Uterus (tissue), 4 donors: ENCODE measurements at regions of chr9 and their contacts with region 1.

Region 1: GRCh38 chr9:124771867-124772679 is 962 bp upstream of the NR6A1 start:
- DNase-seq: peak; percentile 63 to 79
- H3K4me3 ChIP-seq: peak overlapping the region; percentile 43 to 85
- H3K27ac ChIP-seq: peak overlapping the region; percentile 61 to 67
- H3K4me1 ChIP-seq: peaks cover 0 to 19% of the 10 kb centered on the region in 2 donors
- H3K27me3 ChIP-seq: peaks cover 0 to 14% of the 10 kb centered on the region in 2 donors
- CTCF ChIP-seq: peak; percentile 95 to 99 (median 97)
- POLR2A ChIP-seq: no peak

Region 2: DNA sequence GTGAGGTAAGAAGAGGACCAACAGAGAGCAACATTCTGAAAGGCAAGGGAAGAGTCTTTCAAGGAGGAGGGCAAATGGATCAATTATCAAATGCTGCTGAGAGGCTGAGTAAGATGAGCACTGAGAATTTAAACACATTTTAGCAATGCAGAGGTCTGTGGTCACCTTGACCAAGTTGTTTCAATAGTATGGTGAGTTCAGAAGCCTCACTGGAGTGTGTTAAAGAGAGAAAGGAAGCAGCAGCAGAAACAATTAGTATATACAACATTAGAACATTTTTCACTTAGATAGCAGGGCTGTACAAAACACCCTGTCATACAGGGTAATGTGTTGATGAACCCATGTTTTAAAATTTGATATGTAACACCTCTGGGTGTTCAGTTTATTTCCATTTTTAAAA is 132.4 kb before region 1 on chr9:
- intact Hi-C with region 1: no loop called
- DNase-seq: no peak
- H3K4me3 ChIP-seq: no peak overlapping the region
- H3K27ac ChIP-seq: no peak overlapping the region
- H3K4me1 ChIP-seq: no peaks in the 10 kb centered on the region
- H3K27me3 ChIP-seq: no peaks in the 10 kb centered on the region
- CTCF ChIP-seq: no peak
- POLR2A ChIP-seq: no peak

Region 3: DNA sequence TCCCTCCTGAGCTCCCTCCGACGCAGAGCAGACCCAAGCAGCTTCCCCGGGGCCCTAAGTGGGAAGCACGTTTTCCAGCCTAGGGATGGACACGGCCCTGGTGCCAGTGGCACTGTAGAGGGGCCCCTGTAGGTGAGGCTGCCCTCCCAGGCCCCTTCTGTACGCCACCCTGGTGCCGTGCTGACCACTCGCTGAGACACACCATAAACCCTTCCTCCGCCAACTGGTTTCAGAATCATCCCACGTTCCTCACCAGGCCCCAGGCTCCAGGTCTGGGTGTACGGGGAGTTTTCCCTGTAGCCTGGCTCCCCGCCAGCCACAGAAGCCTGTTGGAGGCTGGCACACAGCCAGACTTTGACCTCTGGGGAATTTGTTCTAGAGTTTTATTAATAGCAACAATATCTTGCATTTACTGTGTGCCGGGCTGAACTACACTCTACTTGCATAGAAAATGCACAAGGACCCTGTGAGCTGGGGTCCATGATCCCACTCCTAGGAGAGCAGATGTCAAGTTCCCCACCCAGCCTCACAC is 63.0 kb after region 1 on chr9:
- intact Hi-C with region 1: no loop called
- DNase-seq: peak in 1 of 2 donors; percentile 70
- H3K4me3 ChIP-seq: no peak overlapping the region
- H3K27ac ChIP-seq: peak overlapping the region in 1 of 2 donors; percentile 4
- H3K4me1 ChIP-seq: peaks cover 0 to 4% of the 10 kb centered on the region in 2 donors
- H3K27me3 ChIP-seq: no peaks in the 10 kb centered on the region
- CTCF ChIP-seq: no peak
- POLR2A ChIP-seq: no peak

Region 4: DNA sequence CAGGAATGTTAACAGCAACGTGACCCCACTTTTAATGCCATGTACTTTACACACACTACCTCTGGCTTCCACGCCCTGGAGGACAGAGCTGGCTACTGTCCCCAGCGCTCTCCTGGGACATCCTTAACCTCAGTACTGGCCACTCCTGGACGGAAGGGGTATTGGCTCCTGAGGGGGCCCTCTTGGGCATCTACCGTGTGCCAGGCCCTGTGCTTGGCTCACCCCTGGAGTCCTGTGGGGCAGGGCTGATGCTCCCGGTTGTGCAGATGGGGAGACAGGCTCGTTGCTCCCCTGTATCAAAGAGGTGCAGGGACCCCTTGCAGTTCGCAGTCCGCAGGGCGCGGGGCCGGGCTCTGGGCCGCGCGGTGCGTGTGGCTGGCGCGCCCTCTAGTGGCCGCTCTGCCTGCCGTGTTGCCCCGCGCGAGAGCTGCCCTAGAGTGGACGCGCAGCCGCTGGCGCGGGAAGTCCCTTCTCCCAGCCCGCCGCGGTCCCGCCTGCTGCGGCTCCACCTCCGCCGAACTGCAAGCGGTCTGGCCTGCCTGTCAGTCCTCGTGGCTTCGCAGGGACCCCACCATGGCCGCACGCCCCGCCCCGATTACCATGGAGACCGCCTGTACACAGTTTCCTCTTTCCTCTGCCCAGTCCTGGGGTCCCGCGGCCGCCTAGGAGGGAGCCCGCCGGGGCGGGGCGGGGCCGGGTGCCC is 80.9 kb after region 1 on chr9 and contains the start of gene WDR38:
- intact Hi-C with region 1: loop called (anchors 2 kb)
- DNase-seq: peak; percentile 72 to 77
- H3K4me3 ChIP-seq: peak within 1 kb of the TSS; percentile 25 to 33
- H3K27ac ChIP-seq: peak within 1 kb of the TSS; percentile 64 to 65
- H3K4me1 ChIP-seq: no peaks in the 10 kb centered on the region
- H3K27me3 ChIP-seq: no peaks in the 10 kb centered on the region
- CTCF ChIP-seq: peak; percentile 97 to 99 (median 98)
- POLR2A ChIP-seq: no peak
- total RNA-seq, gene WDR38: 0.79 to 1.9 TPM in 2 of 4 donors, not detected in the others

Region 5: GRCh38 chr9:126723333-126724151 is 1951.5 kb after region 1 on chr9:
- intact Hi-C with region 1: no loop called
- DNase-seq: peak; percentile 42 to 44
- H3K4me3 ChIP-seq: peak overlapping the region; percentile 19 to 41
- H3K27ac ChIP-seq: peak overlapping the region in 1 of 2 donors; percentile 16
- H3K4me1 ChIP-seq: no peaks in the 10 kb centered on the region
- H3K27me3 ChIP-seq: no peaks in the 10 kb centered on the region
- CTCF ChIP-seq: no peak
- POLR2A ChIP-seq: no peak